Heart right ventricle (tissue), 16 donors: ENCODE measurements at regions of chr10 and their contacts with region 1.

Region 1: DNA sequence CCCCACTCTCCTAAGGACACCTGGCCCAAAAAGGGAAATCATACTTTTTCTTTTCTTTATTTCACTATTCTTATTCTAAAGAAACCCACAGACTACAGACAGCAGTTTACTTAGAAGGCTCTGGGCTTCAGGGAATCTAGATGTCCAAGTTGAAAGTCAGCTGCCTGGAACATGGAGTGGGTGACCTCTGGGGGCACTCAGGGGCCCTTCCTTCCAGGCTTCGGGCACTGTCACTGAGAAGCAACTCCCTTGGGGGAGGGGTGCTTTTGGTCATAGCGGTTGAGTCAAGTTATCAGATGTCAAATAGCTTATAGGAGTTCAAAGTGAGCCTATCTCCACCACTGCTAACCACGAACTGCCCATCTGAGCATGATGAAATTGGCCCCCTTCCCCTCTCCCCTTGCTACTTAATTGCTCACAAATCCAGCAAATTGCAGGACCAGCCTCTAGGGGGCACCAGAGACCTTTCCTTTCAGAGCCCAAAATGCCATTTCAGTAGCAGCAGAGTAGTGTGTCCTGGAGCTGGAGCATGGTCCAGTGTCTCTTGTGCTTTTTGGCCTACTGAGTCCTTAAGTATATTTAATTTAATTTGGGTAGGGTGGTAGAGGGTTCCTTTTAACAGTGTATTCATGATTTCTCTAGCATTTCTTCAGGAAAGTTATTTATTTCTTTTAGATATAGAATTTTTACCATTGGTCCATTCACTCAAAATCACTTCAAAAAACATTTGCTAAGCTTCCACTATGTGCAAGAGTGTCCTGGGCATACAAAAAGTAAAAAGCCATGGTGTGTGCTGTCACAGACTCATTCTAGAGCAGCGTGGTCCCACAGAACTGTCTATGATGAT is 463.8 kb downstream of the KCNMA1 start:
- DNase-seq: peak; percentile 43 to 60
- ATAC-seq: peak in 7 of 8 donors; percentile 55 to 75 (median 71)
- H3K4me3 ChIP-seq: no peak overlapping the region
- H3K27ac ChIP-seq: no peak overlapping the region
- H3K4me1 ChIP-seq: no peaks in the 10 kb centered on the region
- H3K27me3 ChIP-seq: peaks cover 0 to 44% (median 13%) of the 10 kb centered on the region in 7 donors
- CTCF ChIP-seq: peak; percentile 68 to 98 (median 87)

Region 2: DNA sequence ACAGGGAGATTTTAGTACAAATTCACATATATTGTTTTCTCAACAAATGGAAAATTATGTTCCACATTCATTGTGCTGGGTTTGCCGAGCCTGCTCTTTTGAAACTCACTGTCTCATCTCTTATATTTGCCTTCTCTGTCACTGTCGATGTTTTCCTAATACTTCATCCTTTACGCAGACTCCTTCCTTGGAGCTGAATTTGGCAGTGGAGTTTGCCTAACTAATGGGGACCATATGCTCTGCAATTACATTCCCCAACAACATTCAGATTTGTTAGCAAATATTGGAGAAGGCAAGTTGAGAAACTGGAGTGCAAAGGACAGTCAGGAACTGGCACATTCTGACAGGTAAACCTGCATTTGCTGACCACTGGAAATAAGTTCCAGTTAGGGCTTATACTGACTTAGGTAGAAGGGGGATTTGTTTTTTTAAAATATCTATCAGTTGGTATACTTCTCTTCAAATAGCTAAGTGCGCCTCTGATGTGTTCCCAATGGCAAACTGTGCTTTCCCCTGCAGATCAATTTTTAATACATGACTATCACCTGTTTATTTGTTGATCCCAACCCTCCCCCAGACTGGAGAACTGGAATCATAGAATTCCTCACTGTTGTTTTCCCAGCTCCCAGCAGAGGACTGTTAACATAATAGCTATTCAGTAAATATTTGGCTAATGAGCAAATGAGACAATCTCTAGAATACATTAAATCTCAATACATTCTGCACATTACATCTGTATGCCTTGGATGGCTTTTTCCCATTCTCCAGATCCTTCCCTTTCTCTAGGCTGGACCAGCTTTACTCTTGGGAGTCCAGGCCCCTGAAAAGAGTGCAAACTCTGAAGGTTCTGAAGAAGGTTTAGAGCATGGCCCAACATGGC is 305.5 kb before region 1 on chr10:
- intact Hi-C with region 1: no loop called
- DNase-seq: no peak
- ATAC-seq: no peak
- H3K4me3 ChIP-seq: no peak overlapping the region
- H3K27ac ChIP-seq: no peak overlapping the region
- H3K4me1 ChIP-seq: peaks cover 0 to 3% (median 0%) of the 10 kb centered on the region in 9 donors
- H3K27me3 ChIP-seq: peaks cover 0 to 4% (median 0%) of the 10 kb centered on the region in 7 donors
- CTCF ChIP-seq: no peak

Region 3: GRCh38 chr10:77391605-77392235 is 217.9 kb after region 1 on chr10:
- intact Hi-C with region 1: loop called in 8 of 10 experiments (anchors 5 to 10 kb)
- DNase-seq: peak; percentile 60 to 78
- ATAC-seq: peak in 7 of 8 donors; percentile 65 to 82 (median 75)
- H3K4me3 ChIP-seq: no peak overlapping the region
- H3K27ac ChIP-seq: no peak overlapping the region
- H3K4me1 ChIP-seq: peaks cover 0 to 29% (median 12%) of the 10 kb centered on the region in 9 donors
- H3K27me3 ChIP-seq: peaks cover 0 to 23% (median 3%) of the 10 kb centered on the region in 7 donors
- CTCF ChIP-seq: peak in 8 of 9 donors; percentile 15 to 62 (median 56)

Region 4: DNA sequence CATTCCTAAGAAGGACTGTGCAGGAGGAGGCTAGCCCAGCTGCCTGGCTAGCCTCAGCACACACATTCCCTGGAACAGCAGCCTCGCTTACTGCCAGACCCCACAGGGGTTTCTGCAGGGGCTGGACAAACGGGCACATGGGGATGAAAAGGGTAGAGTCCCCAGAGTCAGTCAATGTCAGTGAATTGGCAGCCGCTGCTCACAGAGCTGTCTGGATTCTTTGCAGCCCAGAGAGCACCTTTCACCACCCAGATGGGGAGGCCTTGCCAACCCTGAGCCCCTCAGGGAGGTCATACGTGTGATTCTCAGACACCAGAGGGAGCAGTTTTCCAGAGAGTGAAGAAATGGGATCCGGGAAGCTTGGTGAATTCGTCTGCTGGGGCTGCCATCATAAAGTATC is 320.5 kb after region 1 on chr10:
- intact Hi-C with region 1: loop called in 3 of 10 experiments (anchors 5 to 10 kb)
- DNase-seq: no peak
- ATAC-seq: peak in 3 of 8 donors; percentile 16 to 59 (median 34)
- H3K4me3 ChIP-seq: no peak overlapping the region
- H3K27ac ChIP-seq: no peak overlapping the region
- H3K4me1 ChIP-seq: peaks cover 0 to 7% (median 0%) of the 10 kb centered on the region in 9 donors
- H3K27me3 ChIP-seq: peaks cover 0 to 11% (median 0%) of the 10 kb centered on the region in 7 donors
- CTCF ChIP-seq: peak in 7 of 9 donors; percentile 24 to 45 (median 35)

Region 5: GRCh38 chr10:77710759-77711682 is 537.2 kb after region 1 on chr10:
- intact Hi-C with region 1: loop called in 9 of 10 experiments (anchors 2 to 10 kb)
- DNase-seq: peak; percentile 59 to 82
- ATAC-seq: peak; percentile 92 to 96 (median 93)
- H3K4me3 ChIP-seq: peak overlapping the region in 9 of 10 donors; percentile 31 to 52 (median 46)
- H3K27ac ChIP-seq: no peak overlapping the region
- H3K4me1 ChIP-seq: peaks cover 0 to 9% (median 5%) of the 10 kb centered on the region in 9 donors
- H3K27me3 ChIP-seq: peaks cover 0 to 70% (median 45%) of the 10 kb centered on the region in 7 donors
- CTCF ChIP-seq: peak; percentile 91 to 99 (median 95)